ENCODE measurements at regions of chr20 and their contacts with region 1.

Region 1: GRCh38 chr20:50929299-50930138 is 1.7 kb downstream of the ADNP start:
- DNase-seq: peak; percentile 94 to 98 (median 96)
- H3K4me3 ChIP-seq: peak overlapping the region; percentile 71 to 92 (median 88)
- H3K27ac ChIP-seq: peak overlapping the region; percentile 64 to 88
- H3K4me1 ChIP-seq: peaks cover 3 to 20% (median 15%) of the 10 kb centered on the region in 3 donors
- H3K27me3 ChIP-seq: no peaks in the 10 kb centered on the region
- CTCF ChIP-seq: peak; percentile 89

Region 2: GRCh38 chr20:50790651-50791277 is 138.8 kb before region 1 on chr20:
- intact Hi-C with region 1: loop called (anchors 10 kb)
- DNase-seq: peak; percentile 94 to 97 (median 96)
- H3K4me3 ChIP-seq: no peak overlapping the region
- H3K27ac ChIP-seq: peak overlapping the region; percentile 84 to 91
- H3K4me1 ChIP-seq: peaks cover 0 to 11% (median 0%) of the 10 kb centered on the region in 3 donors
- H3K27me3 ChIP-seq: no peaks in the 10 kb centered on the region
- CTCF ChIP-seq: peak; percentile 77

Region 3: GRCh38 chr20:50868509-50869495 is 60.7 kb before region 1 on chr20:
- intact Hi-C with region 1: loop called (anchors 10 kb)
- DNase-seq: peak in 1 of 5 donors; percentile 2
- H3K4me3 ChIP-seq: no peak overlapping the region
- H3K27ac ChIP-seq: no peak overlapping the region
- H3K4me1 ChIP-seq: no peaks in the 10 kb centered on the region
- H3K27me3 ChIP-seq: no peaks in the 10 kb centered on the region
- CTCF ChIP-seq: no peak